Transverse colon (tissue), 4 donors: ENCODE measurements at regions of chr22 and their contacts with region 1.

Region 1: GRCh38 chr22:29883045-29883774 is at the start of gene MTMR3:
- DNase-seq: peak; percentile 98
- H3K4me3 ChIP-seq: peak within 1 kb of the TSS; percentile 95 to 97 (median 95)
- H3K27ac ChIP-seq: peak within 1 kb of the TSS; percentile 96 to 99 (median 98)
- H3K4me1 ChIP-seq: peaks cover 12 to 40% (median 23%) of the 10 kb centered on the region in 4 donors
- H3K27me3 ChIP-seq: no peaks in the 10 kb centered on the region
- CTCF ChIP-seq: peak; percentile 44 to 78 (median 54)
- EP300 ChIP-seq: no peak
- POLR2A ChIP-seq: peak; percentile 82
- total RNA-seq, gene MTMR3: 52.5 to 92.7 (median 70.2) TPM

Region 2: DNA sequence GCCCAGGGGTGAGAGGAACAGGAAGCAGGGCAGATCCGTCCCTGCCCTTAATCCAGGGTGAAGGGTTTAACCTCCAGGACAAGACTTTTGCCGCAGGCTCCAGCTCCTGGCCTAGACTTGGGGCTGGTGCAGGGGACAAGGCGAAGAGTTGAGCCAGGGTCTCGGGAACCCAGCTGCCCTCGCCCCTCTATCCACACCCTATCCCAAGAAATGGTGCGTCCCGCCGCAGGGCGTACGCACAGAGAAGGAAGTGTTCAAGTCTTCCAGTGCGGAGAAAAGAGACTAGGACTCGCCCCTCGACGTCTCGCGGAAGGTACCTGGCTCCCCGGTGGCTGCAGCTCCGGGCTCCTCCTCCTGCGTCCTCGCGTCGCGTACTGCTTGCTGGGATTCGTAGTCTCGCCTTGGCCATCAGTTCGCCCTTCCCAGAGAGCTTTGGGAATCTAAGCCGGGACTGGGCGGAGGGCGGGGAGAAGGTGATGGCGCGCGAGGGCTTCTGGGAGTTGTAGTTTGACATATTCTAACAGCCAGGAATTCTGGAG is 116.5 kb before region 1 on chr22 and contains the start of gene ZMAT5:
- in situ Hi-C with region 1: no loop called
- intact Hi-C with region 1: no loop called
- DNase-seq: peak; percentile 96
- H3K4me3 ChIP-seq: peak within 1 kb of the TSS; percentile 69 to 78 (median 76)
- H3K27ac ChIP-seq: peak within 1 kb of the TSS; percentile 86 to 90 (median 88)
- H3K4me1 ChIP-seq: peaks cover 16 to 25% (median 20%) of the 10 kb centered on the region in 4 donors
- H3K27me3 ChIP-seq: no peaks in the 10 kb centered on the region
- CTCF ChIP-seq: no peak
- EP300 ChIP-seq: no peak
- POLR2A ChIP-seq: peak; percentile 94
- total RNA-seq, gene ZMAT5: 13.8 to 20.2 (median 19.1) TPM in 3 of 4 donors, not detected in the other

Region 3: DNA sequence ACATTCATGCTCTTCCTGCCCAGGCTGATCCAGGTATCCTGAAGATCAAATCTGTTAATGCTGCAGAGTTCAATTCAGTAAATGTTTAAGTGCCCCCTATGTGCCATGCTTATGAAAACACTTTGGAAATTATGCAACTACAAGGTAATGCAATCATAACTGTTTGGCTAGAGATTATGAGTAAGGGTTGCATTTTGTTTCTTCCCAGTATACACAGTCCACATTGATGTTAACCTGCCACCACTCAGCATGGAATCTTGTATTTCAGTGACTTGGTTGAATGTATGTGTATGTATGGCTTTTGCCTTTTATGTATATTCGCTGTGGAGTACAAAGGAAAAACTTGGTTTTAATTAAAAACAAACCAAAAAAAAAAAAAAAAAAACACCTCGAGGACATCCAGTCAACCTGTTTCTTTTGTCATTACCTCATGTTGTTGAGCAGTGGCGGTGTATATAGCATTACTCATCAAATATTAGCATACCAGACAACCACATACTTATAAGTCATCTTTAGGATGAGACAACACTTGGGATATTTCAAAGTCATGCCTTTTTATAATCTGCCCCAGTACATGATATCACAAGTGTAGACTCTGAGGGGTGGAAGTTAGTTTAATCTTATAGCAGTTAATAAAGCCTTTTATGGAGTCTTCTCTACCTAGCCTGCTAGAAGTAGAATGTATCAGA is 111.0 kb after region 1 on chr22:
- in situ Hi-C with region 1: loop called in 1 of 4 experiments (anchors 25 kb)
- intact Hi-C with region 1: loop called (anchors 5 kb)
- DNase-seq: no peak
- H3K4me3 ChIP-seq: no peak overlapping the region
- H3K27ac ChIP-seq: peak overlapping the region; percentile 52 to 72 (median 66)
- H3K4me1 ChIP-seq: peaks cover 7 to 32% (median 18%) of the 10 kb centered on the region in 4 donors
- H3K27me3 ChIP-seq: no peaks in the 10 kb centered on the region
- CTCF ChIP-seq: no peak
- EP300 ChIP-seq: no peak
- POLR2A ChIP-seq: no peak

Region 4: DNA sequence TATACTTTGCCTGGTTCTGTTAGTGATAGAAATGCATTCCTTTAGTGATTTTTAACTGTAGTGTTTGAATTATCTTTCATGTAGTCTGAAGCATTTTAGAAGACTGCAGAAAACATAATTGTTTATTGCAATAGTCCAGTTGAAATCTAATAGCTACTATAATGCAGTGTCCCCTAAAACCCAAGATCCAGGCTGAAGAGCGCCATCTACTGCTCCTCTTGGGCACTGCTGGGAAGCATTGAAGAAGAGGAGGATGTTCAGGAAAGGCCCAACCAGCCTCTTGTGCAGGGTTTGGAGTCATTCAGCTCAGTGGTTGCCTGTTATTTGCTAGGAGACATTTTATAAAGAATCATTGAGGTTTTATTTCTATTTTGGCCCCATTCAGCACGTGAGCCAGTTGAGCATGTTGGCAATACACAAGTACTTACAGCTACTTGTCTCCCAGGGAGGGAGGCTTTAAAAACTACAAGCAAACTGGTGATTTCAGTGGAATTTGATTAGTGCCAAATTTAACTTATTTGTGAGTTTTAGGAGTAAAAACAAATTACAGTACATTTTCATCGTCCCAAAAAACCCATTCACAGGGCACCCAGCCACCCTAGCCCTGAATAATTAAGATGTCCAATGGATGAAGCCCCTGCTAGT is 122.1 kb after region 1 on chr22:
- in situ Hi-C with region 1: no loop called
- intact Hi-C with region 1: no loop called
- DNase-seq: peak; percentile 82
- H3K4me3 ChIP-seq: no peak overlapping the region
- H3K27ac ChIP-seq: no peak overlapping the region
- H3K4me1 ChIP-seq: peaks cover 8 to 47% (median 24%) of the 10 kb centered on the region in 4 donors
- H3K27me3 ChIP-seq: no peaks in the 10 kb centered on the region
- CTCF ChIP-seq: peak; percentile 90 to 96 (median 93)
- EP300 ChIP-seq: no peak
- POLR2A ChIP-seq: no peak

Region 5: GRCh38 chr22:30104501-30105156 is 221.4 kb after region 1 on chr22:
- in situ Hi-C with region 1: no loop called
- intact Hi-C with region 1: no loop called
- DNase-seq: no peak
- H3K4me3 ChIP-seq: no peak overlapping the region
- H3K27ac ChIP-seq: no peak overlapping the region
- H3K4me1 ChIP-seq: peaks cover 0 to 3% (median 0%) of the 10 kb centered on the region in 4 donors
- H3K27me3 ChIP-seq: peaks cover 5% of the 10 kb centered on the region
- CTCF ChIP-seq: no peak
- EP300 ChIP-seq: no peak
- POLR2A ChIP-seq: no peak